ENCODE measurements at regions of chr12 and their contacts with region 1.

Region 1: DNA sequence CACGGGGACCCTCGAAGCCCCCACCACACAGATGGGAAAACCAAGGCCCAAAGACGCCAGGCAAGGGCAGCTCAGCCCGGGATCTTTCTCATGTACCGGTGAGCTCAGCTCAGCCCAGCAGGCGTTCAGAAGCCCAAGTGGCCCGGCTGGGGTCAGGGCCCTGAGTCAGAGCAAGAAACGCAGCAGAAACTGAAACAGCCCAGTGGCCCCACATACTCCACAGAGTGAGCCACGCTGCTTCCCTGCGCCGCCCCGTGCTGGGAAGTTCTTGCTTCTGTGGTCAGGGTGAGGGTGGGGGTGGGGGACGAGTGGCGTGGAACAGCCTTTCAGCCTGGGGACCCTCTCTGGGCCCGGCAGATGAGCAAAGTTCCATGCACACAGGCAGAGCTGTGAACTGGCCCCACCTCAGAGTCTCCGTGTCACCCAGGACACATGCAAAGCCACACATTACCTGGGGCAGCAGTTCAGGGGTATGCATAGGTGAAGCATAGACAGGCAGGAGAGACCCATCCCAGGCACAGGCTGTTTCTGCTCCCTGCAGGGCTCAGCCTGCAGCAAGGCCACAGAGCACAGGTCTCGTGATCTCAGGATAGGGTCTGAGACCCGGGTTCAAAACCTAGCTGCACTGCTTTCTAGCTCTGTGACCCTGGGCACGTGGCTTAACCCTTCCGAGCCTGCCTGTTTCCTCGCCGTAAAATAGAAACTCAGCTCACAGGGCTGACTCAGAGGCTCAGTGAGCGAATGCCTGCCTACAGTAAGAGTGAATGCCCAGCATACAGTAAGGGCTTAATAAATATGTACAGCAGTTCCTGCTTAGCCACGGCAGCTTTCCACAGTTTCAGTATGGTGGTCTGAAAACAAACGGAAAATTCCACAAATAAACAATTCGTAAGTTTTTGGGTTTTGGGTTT is 21.6 kb downstream of the NCOR2 start:
- DNase-seq: peak; percentile 81
- ATAC-seq: peak; percentile 81
- H3K4me3 Mint-ChIP-seq: peak overlapping the region; percentile 7
- H3K27ac Mint-ChIP-seq: no peak overlapping the region
- H3K4me1 Mint-ChIP-seq: peaks cover 73% of the 10 kb centered on the region
- H3K27me3 Mint-ChIP-seq: no peaks in the 10 kb centered on the region
- CTCF ChIP-seq: no peak

Region 2: DNA sequence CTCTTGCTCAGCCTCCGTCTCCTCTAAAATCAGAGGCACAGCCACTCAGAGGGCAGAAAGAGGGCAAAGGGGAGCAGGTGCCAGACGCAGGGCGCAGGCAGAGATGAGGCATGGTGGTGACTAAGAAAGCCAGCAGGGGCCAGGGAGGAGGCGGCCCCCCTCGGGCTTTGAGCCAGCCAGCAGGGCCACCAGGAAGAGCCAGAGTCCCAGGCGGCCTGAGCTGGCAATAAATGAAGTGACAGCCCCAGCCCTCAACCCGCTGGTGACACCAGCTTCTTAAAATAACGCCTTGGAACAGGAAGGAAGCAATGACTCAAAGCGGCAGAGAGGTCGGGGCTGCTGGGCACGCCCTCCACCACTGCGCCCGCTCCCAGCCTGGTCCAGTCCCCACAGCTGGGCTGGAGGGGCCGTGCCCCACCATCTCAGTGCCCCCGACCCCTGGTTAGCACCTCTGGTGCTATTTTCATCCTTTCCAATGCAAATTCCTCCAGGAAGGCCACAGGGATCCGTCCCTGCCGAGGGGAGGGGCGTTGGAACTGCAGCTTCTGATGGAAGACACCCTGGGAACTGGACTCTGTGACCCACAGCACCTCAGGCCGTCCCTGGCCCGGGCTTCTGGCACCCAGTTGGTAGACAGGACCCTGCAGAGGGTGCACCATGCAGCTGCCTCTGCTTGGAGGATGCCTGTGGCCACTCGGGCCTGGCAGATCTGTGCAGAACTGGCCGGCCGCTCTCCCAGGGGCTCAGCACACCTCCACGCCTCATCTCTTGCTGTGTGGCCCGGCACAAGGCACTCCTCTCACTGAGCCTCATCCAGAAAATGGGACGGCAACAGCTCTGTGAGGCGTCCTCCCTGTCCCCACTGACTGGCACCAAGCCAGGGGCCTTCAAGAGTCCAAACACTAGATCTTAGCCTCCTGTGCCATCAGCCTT is 92.1 kb before region 1 on chr12:
- CTCF ChIA-PET with region 1: no interaction called
- POLR2A ChIA-PET with region 1: interaction called, 6 read pairs
- intact Hi-C with region 1: loop called (anchors 10 kb)
- DNase-seq: peak; percentile 94
- ATAC-seq: peak; percentile 87
- H3K4me3 Mint-ChIP-seq: no peak overlapping the region
- H3K27ac Mint-ChIP-seq: no peak overlapping the region
- H3K4me1 Mint-ChIP-seq: peaks cover 65% of the 10 kb centered on the region
- H3K27me3 Mint-ChIP-seq: no peaks in the 10 kb centered on the region
- CTCF ChIP-seq: no peak

Region 3: DNA sequence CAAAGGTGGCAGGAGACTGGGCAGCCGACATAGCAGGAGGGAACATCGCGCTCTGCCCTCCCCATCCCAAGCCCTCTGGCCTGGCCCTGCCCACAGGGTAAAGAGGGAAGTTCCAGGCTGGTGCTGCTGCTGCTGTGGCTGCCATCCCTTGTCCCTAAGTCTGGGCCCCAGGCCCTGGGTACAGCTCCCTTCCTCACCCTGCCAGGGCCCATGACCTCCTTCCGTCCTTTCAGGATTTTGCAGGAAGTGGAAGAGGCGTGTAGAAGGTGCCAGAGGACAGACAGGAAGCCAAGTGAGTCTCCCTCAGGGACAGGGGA is 36.3 kb after region 1 on chr12:
- CTCF ChIA-PET with region 1: no interaction called
- POLR2A ChIA-PET with region 1: no interaction called
- intact Hi-C with region 1: no loop called
- DNase-seq: no peak
- ATAC-seq: no peak
- H3K4me3 Mint-ChIP-seq: no peak overlapping the region
- H3K27ac Mint-ChIP-seq: no peak overlapping the region
- H3K4me1 Mint-ChIP-seq: no peaks in the 10 kb centered on the region
- H3K27me3 Mint-ChIP-seq: no peaks in the 10 kb centered on the region
- CTCF ChIP-seq: no peak